WTC11 (cell line): ENCODE measurements at regions of chr1 and their contacts with region 1.

Region 1: GRCh38 chr1:15152318-15153183 is 996 bp upstream of the TMEM51 start:
- DNase-seq: peak; percentile 83
- ATAC-seq: peak; percentile 25
- H3K4me3 Mint-ChIP-seq: peak overlapping the region; percentile 94
- H3K27ac Mint-ChIP-seq: peak overlapping the region; percentile 82; the same call in 1 of the 2 replicates
- H3K4me1 Mint-ChIP-seq: peaks cover 41% of the 10 kb centered on the region
- H3K27me3 Mint-ChIP-seq: peaks cover 26% of the 10 kb centered on the region
- CTCF ChIP-seq: no peak

Region 2: GRCh38 chr1:15106608-15107007 is 45.9 kb before region 1 on chr1:
- CTCF ChIA-PET with region 1: interaction called, 25 read pairs
- POLR2A ChIA-PET with region 1: no interaction called
- DNase-seq: no peak
- ATAC-seq: no peak
- H3K4me3 Mint-ChIP-seq: no peak overlapping the region
- H3K27ac Mint-ChIP-seq: no peak overlapping the region
- H3K4me1 Mint-ChIP-seq: peaks cover 26% of the 10 kb centered on the region
- H3K27me3 Mint-ChIP-seq: peaks cover 8% of the 10 kb centered on the region
- CTCF ChIP-seq: no peak

Region 3: GRCh38 chr1:15141935-15142539 is 10.5 kb before region 1 on chr1:
- CTCF ChIA-PET with region 1: interaction called, 16 read pairs
- POLR2A ChIA-PET with region 1: no interaction called
- DNase-seq: no peak
- ATAC-seq: no peak
- H3K4me3 Mint-ChIP-seq: no peak overlapping the region
- H3K27ac Mint-ChIP-seq: no peak overlapping the region
- H3K4me1 Mint-ChIP-seq: peaks cover 12% of the 10 kb centered on the region
- H3K27me3 Mint-ChIP-seq: peaks cover 2% of the 10 kb centered on the region; the same call in 1 of the 2 replicates
- CTCF ChIP-seq: no peak

Region 4: GRCh38 chr1:15171271-15171908 is 18.8 kb after region 1 on chr1:
- CTCF ChIA-PET with region 1: interaction called, 12 read pairs
- POLR2A ChIA-PET with region 1: no interaction called
- DNase-seq: no peak
- ATAC-seq: peak; percentile 74
- H3K4me3 Mint-ChIP-seq: no peak overlapping the region
- H3K27ac Mint-ChIP-seq: no peak overlapping the region
- H3K4me1 Mint-ChIP-seq: peaks cover 35% of the 10 kb centered on the region
- H3K27me3 Mint-ChIP-seq: no peaks in the 10 kb centered on the region
- CTCF ChIP-seq: no peak

Region 5: DNA sequence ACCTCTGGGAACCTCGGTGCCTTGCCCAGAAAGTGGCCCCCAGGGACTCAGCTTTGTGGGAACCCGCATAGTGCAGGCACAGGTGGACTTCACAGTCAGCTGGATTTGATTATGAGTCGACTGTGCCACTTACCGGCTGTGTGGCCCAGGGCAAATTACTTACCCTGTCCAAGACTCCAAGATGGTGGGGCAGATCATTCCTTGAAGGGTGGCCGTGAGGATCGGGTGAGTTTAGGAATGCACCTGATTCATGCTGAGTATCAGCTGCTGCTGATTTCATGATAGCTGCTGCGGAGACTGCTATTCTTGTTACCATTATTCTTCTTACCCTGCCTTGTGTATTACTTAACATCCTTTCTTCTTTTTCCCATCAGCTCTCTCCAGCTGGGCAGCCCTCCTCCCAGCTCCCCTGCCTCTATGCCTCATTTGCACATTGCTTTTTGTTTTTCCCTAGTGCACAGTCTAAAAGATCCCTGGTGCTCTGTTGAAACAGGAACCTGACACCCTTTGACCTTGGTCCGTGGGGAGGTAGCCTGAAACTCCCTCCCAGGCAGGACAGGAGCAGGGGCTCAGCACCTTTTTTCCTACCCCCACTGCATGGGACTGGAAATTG is 54.0 kb after region 1 on chr1:
- CTCF ChIA-PET with region 1: interaction called, 27 read pairs
- POLR2A ChIA-PET with region 1: interaction called, 4 read pairs
- DNase-seq: no peak
- ATAC-seq: peak; percentile 81
- H3K4me3 Mint-ChIP-seq: peak overlapping the region; percentile 62
- H3K27ac Mint-ChIP-seq: peak overlapping the region; percentile 98
- H3K4me1 Mint-ChIP-seq: peaks cover 64% of the 10 kb centered on the region
- H3K27me3 Mint-ChIP-seq: no peaks in the 10 kb centered on the region
- CTCF ChIP-seq: no peak

Region 6: DNA sequence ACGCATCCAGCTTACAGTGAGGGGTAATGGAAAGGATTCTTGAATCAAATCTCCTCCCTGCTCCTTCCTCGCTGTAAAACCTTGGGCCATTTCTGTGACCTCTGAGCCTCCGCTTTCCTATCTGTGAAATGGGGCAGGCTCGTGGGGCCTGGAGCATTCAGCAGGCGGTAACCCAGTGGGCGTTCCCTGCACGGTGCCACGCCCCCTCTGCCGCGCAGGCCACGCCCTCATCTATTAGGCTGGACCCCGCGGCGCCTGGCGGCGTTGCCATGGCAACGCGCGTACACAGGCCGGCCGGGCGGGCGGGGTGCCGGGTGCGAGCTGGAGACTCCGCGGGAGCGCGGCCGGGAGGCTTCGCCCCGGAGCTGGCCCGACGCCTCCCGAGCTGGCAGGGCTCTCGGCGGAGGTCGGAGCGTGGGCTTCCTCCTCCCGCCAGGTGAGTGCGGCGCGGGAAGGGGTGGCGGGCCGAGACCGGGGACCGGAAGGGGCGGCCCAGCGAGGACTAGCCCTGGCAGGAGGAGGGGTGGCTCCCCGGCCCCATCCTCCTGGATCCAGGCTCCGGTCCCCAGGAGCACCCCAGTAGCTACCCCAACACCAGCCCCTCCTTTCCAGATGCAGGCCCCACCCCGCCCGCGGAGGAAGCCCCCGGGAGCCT is 94.5 kb after region 1 on chr1 and contains the start of gene FHAD1:
- CTCF ChIA-PET with region 1: interaction called, 15 read pairs
- POLR2A ChIA-PET with region 1: no interaction called
- DNase-seq: peak; percentile 86
- ATAC-seq: peak; percentile 77
- H3K4me3 Mint-ChIP-seq: peak within 1 kb of the TSS; percentile 71
- H3K27ac Mint-ChIP-seq: peak within 1 kb of the TSS; percentile 15; the same call in 1 of the 2 replicates
- H3K4me1 Mint-ChIP-seq: peaks cover 38% of the 10 kb centered on the region
- H3K27me3 Mint-ChIP-seq: peaks cover 10% of the 10 kb centered on the region; the same call in 1 of the 2 replicates
- CTCF ChIP-seq: no peak
- total RNA-seq, gene FHAD1: 2.6 to 3.0 TPM (median 2.9 TPM) in 3 replicates

Region 7: DNA sequence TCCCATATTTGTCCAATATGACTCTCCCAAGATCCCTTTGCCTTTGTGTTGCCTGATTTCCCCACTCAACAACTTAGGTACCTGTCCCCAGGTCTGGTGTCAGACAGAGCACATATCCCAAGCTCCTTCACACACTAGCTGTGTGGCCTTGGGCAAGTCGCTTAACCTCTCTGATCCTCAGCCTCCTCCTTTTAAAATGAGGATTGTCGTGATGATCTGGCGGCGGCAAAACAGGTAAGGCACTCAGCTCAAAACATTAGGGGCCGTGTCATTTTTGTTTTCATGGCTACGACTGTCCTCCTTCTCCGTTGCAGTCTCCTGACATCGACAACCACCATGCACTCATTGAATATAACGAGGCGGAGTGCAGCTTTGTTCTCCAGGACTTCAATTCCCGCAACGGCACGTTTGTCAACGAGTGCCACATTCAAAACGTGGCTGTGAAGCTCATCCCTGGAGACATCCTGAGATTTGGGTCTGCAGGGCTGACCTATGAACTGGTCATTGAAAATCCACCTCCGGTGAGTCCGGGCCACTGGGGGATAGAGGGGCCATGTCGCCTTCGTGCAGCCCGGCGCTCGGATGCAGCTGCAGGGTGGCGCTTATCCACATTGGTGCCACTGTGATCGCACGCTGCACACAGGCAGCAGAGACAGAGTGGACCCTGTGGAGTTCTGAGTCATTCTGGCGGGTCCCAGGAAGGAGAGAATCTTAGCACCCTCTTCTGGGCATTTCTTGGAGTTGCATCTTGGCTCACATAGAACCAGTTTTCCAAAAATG is 119.6 kb after region 1 on chr1:
- CTCF ChIA-PET with region 1: interaction called, 60 read pairs
- POLR2A ChIA-PET with region 1: no interaction called
- DNase-seq: peak; percentile 69
- ATAC-seq: peak; percentile 99
- H3K4me3 Mint-ChIP-seq: peak overlapping the region; percentile 49
- H3K27ac Mint-ChIP-seq: no peak overlapping the region
- H3K4me1 Mint-ChIP-seq: peaks cover 9% of the 10 kb centered on the region
- H3K27me3 Mint-ChIP-seq: peaks cover 6% of the 10 kb centered on the region
- CTCF ChIP-seq: peak; percentile 66; the same call in 1 of the 2 replicates

Region 8: GRCh38 chr1:15352123-15352957 is 199.8 kb after region 1 on chr1:
- CTCF ChIA-PET with region 1: no interaction called
- POLR2A ChIA-PET with region 1: no interaction called
- DNase-seq: no peak
- ATAC-seq: no peak
- H3K4me3 Mint-ChIP-seq: no peak overlapping the region
- H3K27ac Mint-ChIP-seq: no peak overlapping the region
- H3K4me1 Mint-ChIP-seq: no peaks in the 10 kb centered on the region
- H3K27me3 Mint-ChIP-seq: no peaks in the 10 kb centered on the region
- CTCF ChIP-seq: no peak